RWPE1 (cell line): ENCODE measurements at regions of chr1 and their contacts with region 1.

Region 1: GRCh38 chr1:30379684-30380624 is 343.4 kb downstream of the MATN1 start:
- DNase-seq: peak; percentile 82
- H3K27ac ChIP-seq: peak overlapping the region; percentile 42
- CTCF ChIP-seq: peak; percentile 89

Region 2: DNA sequence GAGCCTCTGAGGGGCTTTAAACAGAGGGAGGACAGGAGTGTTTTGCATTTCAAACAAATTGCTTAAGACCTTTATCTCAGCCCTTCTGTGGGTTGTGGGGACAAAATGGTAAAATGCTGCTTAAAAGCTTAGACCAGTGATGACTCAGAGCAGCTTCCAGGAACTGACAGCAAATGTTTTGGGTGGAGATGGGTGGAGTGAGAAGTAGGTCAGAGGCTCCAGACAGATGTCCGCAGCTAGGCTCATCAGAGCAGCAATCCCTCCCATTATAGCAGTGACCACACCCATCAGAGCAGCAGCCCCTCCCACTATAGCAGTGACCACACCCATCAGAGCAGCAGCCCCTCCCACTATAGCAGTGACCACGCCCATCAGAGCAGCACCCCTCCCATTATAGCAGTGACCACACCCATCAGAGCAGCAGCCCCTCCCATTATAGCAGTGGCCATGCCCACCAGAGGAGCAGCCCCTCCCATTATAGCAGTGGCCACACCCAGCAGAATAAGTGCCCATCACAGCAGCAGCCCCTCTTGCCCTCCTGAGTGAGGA is 188.7 kb before region 1 on chr1:
- CTCF ChIA-PET with region 1: no interaction called
- POLR2A ChIA-PET with region 1: no interaction called
- DNase-seq: peak; percentile 56
- H3K27ac ChIP-seq: peak overlapping the region; percentile 74
- CTCF ChIP-seq: no peak

Region 3: GRCh38 chr1:30336550-30337323 is 43.2 kb before region 1 on chr1:
- CTCF ChIA-PET with region 1: no interaction called
- POLR2A ChIA-PET with region 1: no interaction called
- DNase-seq: no peak
- H3K27ac ChIP-seq: no peak overlapping the region
- CTCF ChIP-seq: no peak

Region 4: GRCh38 chr1:30362603-30362990 is 17.4 kb before region 1 on chr1:
- CTCF ChIA-PET with region 1: interaction called, 16 read pairs
- POLR2A ChIA-PET with region 1: no interaction called
- DNase-seq: no peak
- H3K27ac ChIP-seq: no peak overlapping the region
- CTCF ChIP-seq: no peak

Region 5: GRCh38 chr1:30368651-30369240 is 11.2 kb before region 1 on chr1:
- CTCF ChIA-PET with region 1: interaction called, 17 read pairs
- POLR2A ChIA-PET with region 1: no interaction called
- DNase-seq: no peak
- H3K27ac ChIP-seq: no peak overlapping the region
- CTCF ChIP-seq: no peak

Region 6: DNA sequence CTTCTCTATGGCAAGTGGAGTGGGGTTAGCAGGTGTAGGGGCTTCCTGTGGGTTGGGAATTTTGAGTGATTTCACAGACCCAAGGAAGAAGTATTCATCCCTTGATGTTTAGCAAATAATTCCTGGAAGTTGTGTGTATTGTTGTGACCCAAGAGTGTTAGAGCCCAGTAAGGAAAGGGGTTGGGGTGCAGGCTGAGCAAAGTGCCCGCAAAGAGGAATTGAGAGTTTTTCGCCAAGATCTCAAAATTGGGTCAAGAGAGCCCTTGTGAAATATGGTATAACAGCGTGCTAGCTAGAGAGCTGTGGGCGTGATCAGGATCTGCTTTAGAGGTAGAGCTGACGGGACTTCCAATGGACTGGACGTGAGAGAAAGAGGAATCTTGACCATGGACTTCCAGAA is 450.6 kb after region 1 on chr1:
- CTCF ChIA-PET with region 1: no interaction called
- POLR2A ChIA-PET with region 1: no interaction called
- DNase-seq: no peak
- H3K27ac ChIP-seq: no peak overlapping the region
- CTCF ChIP-seq: no peak